ENCODE measurements at regions of chrX and their contacts with region 1.

Region 1: DNA sequence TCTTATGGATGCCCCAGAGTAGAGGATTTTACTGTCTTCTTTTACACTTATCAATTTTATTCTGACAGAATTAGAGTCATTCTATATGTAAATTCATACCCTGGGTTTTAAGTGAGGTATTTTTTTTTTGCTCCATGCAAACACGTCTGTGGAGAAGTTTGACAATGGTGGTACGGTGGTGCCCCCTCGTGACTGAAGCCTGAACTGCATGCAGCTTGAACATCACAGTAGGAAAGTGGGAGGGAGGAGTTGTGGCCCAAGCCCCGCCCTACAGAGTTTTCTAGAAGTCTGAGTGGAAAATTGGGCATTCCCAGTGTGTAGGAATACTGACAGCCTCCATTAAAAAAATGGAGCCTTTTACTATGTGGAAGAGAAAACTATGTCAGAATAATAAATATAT is 73.3 kb upstream of the RAB40AL start:
- DNase-seq: peak; percentile 88
- ATAC-seq: peak; percentile 84
- H3K4me3 ChIP-seq: no peak overlapping the region
- H3K27ac ChIP-seq: no peak overlapping the region
- H3K4me1 ChIP-seq: peaks cover 4% of the 10 kb centered on the region; the same call in 1 of the 2 replicates
- H3K27me3 ChIP-seq: no peaks in the 10 kb centered on the region
- CTCF ChIP-seq: peak; percentile 85

Region 2: GRCh38 chrX:102129473-102129872 is 734.3 kb before region 1 on chrX:
- CTCF ChIA-PET with region 1: no interaction called
- POLR2A ChIA-PET with region 1: no interaction called
- intact Hi-C with region 1: loop called (anchors 10 kb)
- DNase-seq: peak; percentile 41
- ATAC-seq: no peak
- H3K4me3 ChIP-seq: no peak overlapping the region
- H3K27ac ChIP-seq: no peak overlapping the region
- H3K4me1 ChIP-seq: no peaks in the 10 kb centered on the region
- H3K27me3 ChIP-seq: 0 out of 2 replicates have a peak, but pooled peaks cover 6% of the 10 kb centered on the region
- CTCF ChIP-seq: peak; percentile 55

Region 3: DNA sequence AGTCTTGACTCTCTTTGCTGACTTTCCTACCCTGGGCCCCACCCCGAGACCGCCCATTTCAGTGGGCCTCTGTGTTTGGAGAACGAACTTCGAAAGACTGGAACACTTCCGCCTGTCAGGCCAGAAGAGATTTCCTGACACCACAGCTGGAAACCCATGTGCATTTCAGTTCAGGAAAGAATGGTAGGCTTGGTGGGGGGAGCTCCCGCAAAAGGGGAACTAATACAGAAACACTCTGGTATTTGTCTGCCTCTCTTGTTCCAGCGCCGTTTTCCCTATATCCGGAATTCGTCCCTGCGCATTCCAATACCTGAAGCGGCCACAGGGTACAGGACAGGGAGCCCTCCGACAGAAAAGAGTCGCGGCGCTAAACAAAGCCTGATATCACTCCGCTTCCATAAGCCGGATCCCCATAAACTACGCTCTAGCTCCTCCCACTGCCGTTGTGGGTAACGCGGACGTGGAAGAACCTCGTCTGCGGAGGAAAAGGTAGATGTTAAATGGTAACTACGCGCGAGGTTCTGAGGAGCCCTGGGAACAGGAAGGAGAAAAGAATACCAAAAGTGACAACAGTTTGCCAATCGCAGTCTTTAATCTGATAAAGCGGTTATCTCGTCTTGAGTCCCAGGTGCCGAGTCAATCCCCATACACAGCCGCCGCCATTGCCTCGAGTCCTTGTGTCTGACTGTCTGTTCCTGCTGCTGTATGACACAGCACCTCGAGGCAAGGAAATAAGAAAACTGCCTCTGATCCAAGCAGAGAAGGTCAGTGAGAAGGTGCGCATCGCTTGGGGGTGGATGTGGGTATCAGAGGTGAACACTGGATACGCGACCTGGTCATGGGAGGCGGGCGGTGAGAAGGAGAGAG is 264.4 kb before region 1 on chrX and contains the start of gene ARMCX5:
- CTCF ChIA-PET with region 1: no interaction called
- POLR2A ChIA-PET with region 1: no interaction called
- intact Hi-C with region 1: loop called (anchors 5 kb)
- DNase-seq: peak; percentile 89
- ATAC-seq: peak; percentile 90
- H3K4me3 ChIP-seq: peak within 1 kb of the TSS; percentile 94
- H3K27ac ChIP-seq: peak within 1 kb of the TSS; percentile 49
- H3K4me1 ChIP-seq: peaks cover 15% of the 10 kb centered on the region
- H3K27me3 ChIP-seq: no peaks in the 10 kb centered on the region
- CTCF ChIP-seq: no peak
- total RNA-seq, gene ARMCX5: 22.6 and 39.2 TPM in 2 replicates

Region 4: GRCh38 chrX:102840871-102841705 is 22.6 kb before region 1 on chrX:
- CTCF ChIA-PET with region 1: no interaction called
- POLR2A ChIA-PET with region 1: no interaction called
- intact Hi-C with region 1: loop called (anchors 2 kb)
- DNase-seq: peak; percentile 80
- ATAC-seq: peak; percentile 95
- H3K4me3 ChIP-seq: no peak overlapping the region
- H3K27ac ChIP-seq: peak overlapping the region; percentile 76
- H3K4me1 ChIP-seq: peaks cover 20% of the 10 kb centered on the region
- H3K27me3 ChIP-seq: no peaks in the 10 kb centered on the region
- CTCF ChIP-seq: peak; percentile 83

Region 5: GRCh38 chrX:102934624-102935023 is 70.9 kb after region 1 on chrX:
- CTCF ChIA-PET with region 1: no interaction called
- POLR2A ChIA-PET with region 1: no interaction called
- intact Hi-C with region 1: loop called (anchors 10 kb)
- DNase-seq: peak; percentile 67
- ATAC-seq: no peak
- H3K4me3 ChIP-seq: no peak overlapping the region
- H3K27ac ChIP-seq: no peak overlapping the region
- H3K4me1 ChIP-seq: peaks cover 40% of the 10 kb centered on the region
- H3K27me3 ChIP-seq: no peaks in the 10 kb centered on the region
- CTCF ChIP-seq: peak; percentile 74